CD14-positive monocyte (primary cell): ENCODE measurements at regions of chr12 and their contacts with region 1.

Region 1: GRCh38 chr12:101839324-101840283 is 8.8 kb upstream of the GNPTAB start:
- DNase-seq: peak; percentile 51 to 67 (median 61)
- H3K4me3 ChIP-seq: no peak overlapping the region
- H3K4me3 Mint-ChIP-seq: no peak overlapping the region
- H3K27ac ChIP-seq: no peak overlapping the region
- H3K27ac Mint-ChIP-seq: no peak overlapping the region
- H3K4me1 ChIP-seq: peaks cover 0 to 4% of the 10 kb centered on the region in 2 donors
- H3K4me1 Mint-ChIP-seq: peaks cover 11% of the 10 kb centered on the region
- H3K27me3 ChIP-seq: no peaks in the 10 kb centered on the region
- H3K27me3 Mint-ChIP-seq: peaks cover 0 to 2% (median 2%) of the 10 kb centered on the region in 3 donors
- CTCF ChIP-seq: peak; percentile 92

Region 2: GRCh38 chr12:101414533-101415119 is 425.0 kb before region 1 on chr12:
- intact Hi-C with region 1: loop called (anchors 10 kb)
- DNase-seq: peak; percentile 48 to 73 (median 53)
- H3K4me3 ChIP-seq: no peak overlapping the region
- H3K4me3 Mint-ChIP-seq: no peak overlapping the region
- H3K27ac ChIP-seq: no peak overlapping the region
- H3K27ac Mint-ChIP-seq: no peak overlapping the region
- H3K4me1 ChIP-seq: no peaks in the 10 kb centered on the region
- H3K4me1 Mint-ChIP-seq: no peaks in the 10 kb centered on the region
- H3K27me3 ChIP-seq: no peaks in the 10 kb centered on the region
- H3K27me3 Mint-ChIP-seq: peaks cover 2 to 5% (median 2%) of the 10 kb centered on the region in 3 donors
- CTCF ChIP-seq: peak; percentile 76

Region 3: DNA sequence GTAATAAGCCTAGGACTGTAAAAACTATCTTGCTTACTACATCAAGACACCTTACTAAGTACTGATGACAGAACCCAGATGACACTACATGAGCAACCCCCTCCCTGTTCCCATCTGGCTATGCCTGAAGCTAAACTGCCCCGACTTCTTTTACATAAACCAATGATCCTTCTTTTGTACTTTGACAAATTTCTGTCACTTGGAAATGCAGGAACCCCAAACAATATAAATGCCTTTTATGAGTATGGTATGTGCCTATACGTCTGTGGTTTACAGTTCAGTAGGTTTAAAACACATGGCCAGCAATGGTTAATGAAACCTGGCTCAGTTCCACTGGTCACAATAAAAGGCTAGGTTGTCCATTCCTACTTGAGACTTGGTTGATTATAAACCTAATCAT is 106.4 kb before region 1 on chr12:
- intact Hi-C with region 1: no loop called
- DNase-seq: no peak
- H3K4me3 ChIP-seq: no peak overlapping the region
- H3K4me3 Mint-ChIP-seq: no peak overlapping the region
- H3K27ac ChIP-seq: no peak overlapping the region
- H3K27ac Mint-ChIP-seq: peak overlapping the region in 1 of 7 donors; percentile 46
- H3K4me1 ChIP-seq: no peaks in the 10 kb centered on the region
- H3K4me1 Mint-ChIP-seq: no peaks in the 10 kb centered on the region
- H3K27me3 ChIP-seq: no peaks in the 10 kb centered on the region
- H3K27me3 Mint-ChIP-seq: peaks cover 0 to 1% (median 0%) of the 10 kb centered on the region in 3 donors
- CTCF ChIP-seq: no peak

Region 4: DNA sequence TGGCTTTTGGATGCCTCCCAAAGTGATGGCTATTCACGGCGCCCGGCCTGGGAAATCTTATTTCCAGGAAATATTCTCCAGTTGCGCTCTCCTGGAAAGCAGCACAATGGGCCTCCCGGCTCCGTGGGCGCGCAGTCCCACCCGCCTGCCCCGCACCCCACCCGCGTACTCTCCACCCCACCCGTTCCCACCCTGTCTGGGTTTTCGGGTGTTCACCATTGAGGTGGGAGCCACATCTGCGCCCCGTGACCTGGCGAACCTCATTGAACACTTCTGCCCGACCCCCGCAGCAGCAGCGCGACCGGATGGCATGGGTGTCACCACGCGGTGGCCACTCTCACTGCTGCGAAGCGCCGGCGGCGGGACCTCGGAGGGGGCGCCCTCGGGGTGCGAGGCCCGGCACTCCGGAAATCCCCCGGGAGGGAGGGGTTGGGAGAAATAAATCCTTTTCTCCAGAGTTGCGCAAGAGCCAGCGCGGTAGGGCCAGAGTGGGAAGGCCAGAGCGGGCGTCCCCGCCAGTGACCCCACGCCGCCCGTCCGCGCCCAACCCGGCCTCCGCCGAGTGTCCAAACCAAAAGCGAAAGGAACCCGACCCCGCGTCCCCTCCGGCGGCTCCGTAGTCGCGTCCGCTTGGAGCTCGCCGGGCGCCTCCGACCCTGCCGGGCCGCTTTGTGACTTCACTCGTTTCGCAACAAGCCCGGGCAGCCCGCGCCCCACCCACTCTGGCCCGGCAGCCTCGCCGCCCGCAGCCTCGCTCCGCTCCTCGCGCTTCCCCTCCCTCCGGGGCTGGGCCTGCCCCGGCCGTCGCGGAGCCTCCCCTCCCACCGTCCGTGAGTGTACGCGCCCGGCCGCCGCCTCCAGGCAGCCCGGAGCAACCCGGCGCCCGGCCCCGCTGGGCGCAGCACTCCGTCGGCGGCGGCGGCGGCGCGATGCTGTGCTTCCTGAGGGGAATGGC is 37.5 kb after region 1 on chr12 and contains the start of gene DRAM1:
- intact Hi-C with region 1: loop called in 1 of 2 experiments (anchors 5 kb)
- DNase-seq: peak; percentile 90 to 95 (median 93)
- H3K4me3 ChIP-seq: peak within 1 kb of the TSS; percentile 91 to 96 (median 95)
- H3K4me3 Mint-ChIP-seq: peak within 1 kb of the TSS; percentile 95 to 99
- H3K27ac ChIP-seq: peak within 1 kb of the TSS; percentile 95 to 96
- H3K27ac Mint-ChIP-seq: peak within 1 kb of the TSS; percentile 95 to 99 (median 98)
- H3K4me1 ChIP-seq: peaks cover 56 to 69% of the 10 kb centered on the region in 2 donors
- H3K4me1 Mint-ChIP-seq: peaks cover 61% of the 10 kb centered on the region
- H3K27me3 ChIP-seq: no peaks in the 10 kb centered on the region
- H3K27me3 Mint-ChIP-seq: peaks cover 0 to 3% (median 0%) of the 10 kb centered on the region in 3 donors
- CTCF ChIP-seq: no peak
- polyA plus RNA-seq, gene DRAM1: 14.0 to 49.7 (median 43.0) TPM

Region 5: GRCh38 chr12:102010265-102010994 is 170.8 kb after region 1 on chr12:
- intact Hi-C with region 1: no loop called
- DNase-seq: peak; percentile 21 to 44 (median 40)
- H3K4me3 ChIP-seq: peak overlapping the region in 2 of 3 experiments; percentile 49 to 59
- H3K4me3 Mint-ChIP-seq: peak overlapping the region; percentile 62 to 82
- H3K27ac ChIP-seq: peak overlapping the region in 1 of 2 donors; percentile 58
- H3K27ac Mint-ChIP-seq: peak overlapping the region in 6 of 7 donors; percentile 33 to 82 (median 47)
- H3K4me1 ChIP-seq: peaks cover 12 to 14% of the 10 kb centered on the region in 2 donors
- H3K4me1 Mint-ChIP-seq: peaks cover 11% of the 10 kb centered on the region
- H3K27me3 ChIP-seq: no peaks in the 10 kb centered on the region
- H3K27me3 Mint-ChIP-seq: peaks cover 0 to 2% (median 0%) of the 10 kb centered on the region in 3 donors
- CTCF ChIP-seq: no peak